Mucosa of descending colon (tissue), 3 donors: ENCODE measurements at regions of chr4 and their contacts with region 1.

Region 1: DNA sequence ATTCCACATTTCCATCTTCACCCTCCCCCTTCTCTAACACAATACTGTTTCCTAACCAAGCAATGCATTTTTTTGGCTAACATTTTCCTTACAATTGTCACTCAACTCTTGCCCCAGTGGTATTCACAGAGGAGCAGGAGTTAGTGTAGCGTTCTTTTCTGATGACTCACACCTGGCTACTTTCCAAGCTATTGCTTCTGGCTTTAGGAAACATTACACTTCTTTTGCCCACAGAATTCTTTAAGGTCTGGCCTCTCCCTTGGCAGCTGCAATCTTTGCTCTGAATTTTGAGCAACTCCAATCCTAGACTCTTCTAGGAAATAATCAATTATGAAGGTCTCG is 27.5 kb upstream of the PDGFC start:
- DNase-seq: peak in 1 of 3 donors; percentile 43
- ATAC-seq: peak; percentile 55
- H3K4me3 ChIP-seq: no peak overlapping the region
- H3K4me1 ChIP-seq: no peaks in the 10 kb centered on the region
- CTCF ChIP-seq: no peak

Region 2: GRCh38 chr4:157045507-157046127 is 46.5 kb after region 1 on chr4:
- intact Hi-C with region 1: loop called in 1 of 2 experiments (anchors 10 kb)
- DNase-seq: peak in 1 of 3 donors; percentile 22
- ATAC-seq: peak; percentile 65
- H3K4me3 ChIP-seq: no peak overlapping the region
- H3K4me1 ChIP-seq: no peaks in the 10 kb centered on the region
- CTCF ChIP-seq: peak; percentile 12